ENCODE measurements at regions of chr7 and their contacts with region 1.

Region 1: DNA sequence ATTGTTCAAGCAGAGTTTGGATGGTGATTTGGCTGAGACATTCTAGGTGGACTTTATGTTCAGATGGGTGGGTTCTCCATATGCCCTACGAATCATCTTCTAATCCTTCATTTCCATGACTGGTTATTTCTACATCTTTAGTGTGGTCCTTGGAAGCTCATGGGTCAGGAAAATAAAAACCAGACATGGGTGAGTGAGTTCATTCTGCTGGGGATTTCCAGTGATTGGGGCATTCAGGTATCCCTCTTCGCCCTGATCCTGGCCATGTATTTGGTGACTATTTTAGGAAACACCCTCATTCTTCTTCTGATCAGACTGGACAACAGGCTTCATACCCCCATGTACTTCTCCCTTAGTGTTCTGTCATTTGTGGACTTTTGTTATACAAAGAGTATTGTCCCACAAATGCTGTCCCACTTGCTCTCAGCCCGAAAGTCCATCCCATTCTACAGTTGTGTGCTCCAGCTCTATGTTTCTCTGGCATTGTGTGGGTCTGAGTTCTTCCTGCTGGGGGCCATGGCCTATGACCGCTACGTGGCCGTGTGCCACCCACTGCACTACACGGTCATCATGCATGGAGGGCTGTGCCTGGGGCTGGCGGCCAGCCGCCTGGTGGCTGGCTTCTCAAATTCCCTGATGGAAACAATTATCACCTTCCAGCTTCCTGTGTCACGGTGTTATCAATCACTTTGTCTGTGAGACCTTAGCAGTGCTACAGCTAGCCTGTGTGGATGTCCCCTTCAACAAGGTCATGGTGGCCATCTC is 19.2 kb upstream of the OR6B1 start:
- DNase-seq: no peak
- H3K4me3 ChIP-seq: no peak overlapping the region
- H3K27ac ChIP-seq: no peak overlapping the region
- H3K4me1 ChIP-seq: no peaks in the 10 kb centered on the region
- H3K27me3 ChIP-seq: no peaks in the 10 kb centered on the region
- CTCF ChIP-seq: no peak
- EP300 ChIP-seq: no peak
- POLR2A ChIP-seq: no peak

Region 2: DNA sequence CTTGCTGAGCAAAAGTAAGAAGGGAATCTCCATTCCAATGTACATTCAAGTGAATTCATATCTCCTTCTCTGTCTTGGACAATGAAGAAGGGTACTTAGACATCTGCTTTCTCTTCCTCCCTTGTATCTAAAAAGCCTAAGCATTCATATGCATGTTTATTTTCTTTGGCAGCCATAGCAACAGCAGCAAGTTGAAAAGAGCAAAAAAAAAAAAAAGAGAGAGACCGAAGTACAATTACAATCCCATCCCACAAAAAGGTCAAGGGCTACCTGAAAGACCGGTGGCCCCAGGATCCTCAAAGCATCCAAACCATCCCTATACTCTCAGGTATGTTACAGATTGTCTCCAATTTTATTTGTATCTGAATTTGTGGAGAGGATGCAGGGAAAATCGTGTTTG is 22.1 kb before region 1 on chr7:
- intact Hi-C with region 1: loop called in 1 of 4 experiments (anchors 2 kb)
- DNase-seq: no peak
- H3K4me3 ChIP-seq: no peak overlapping the region
- H3K27ac ChIP-seq: no peak overlapping the region
- H3K4me1 ChIP-seq: no peaks in the 10 kb centered on the region
- H3K27me3 ChIP-seq: no peaks in the 10 kb centered on the region
- CTCF ChIP-seq: no peak
- EP300 ChIP-seq: no peak
- POLR2A ChIP-seq: no peak

Region 3: DNA sequence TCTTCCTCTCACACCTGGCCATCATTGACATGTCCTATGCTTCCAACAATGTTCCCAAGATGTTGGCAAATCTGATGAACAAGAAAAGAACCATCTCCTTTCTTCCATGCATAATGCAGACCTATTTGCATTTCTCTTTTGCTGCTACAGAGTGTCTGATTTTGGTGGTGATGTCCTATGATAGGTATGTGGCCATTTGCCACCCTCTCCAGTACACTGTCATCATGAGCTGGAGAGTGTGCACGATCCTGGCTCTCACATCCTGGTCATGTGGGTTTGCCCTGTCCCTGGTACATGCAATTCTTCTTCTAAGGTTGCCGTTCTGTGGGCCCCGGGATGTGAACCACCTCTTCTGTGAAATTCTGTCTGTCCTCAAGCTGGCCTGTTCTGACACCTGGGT is 161.3 kb after region 1 on chr7:
- intact Hi-C with region 1: no loop called
- DNase-seq: no peak
- H3K4me3 ChIP-seq: no peak overlapping the region
- H3K27ac ChIP-seq: no peak overlapping the region
- H3K4me1 ChIP-seq: no peaks in the 10 kb centered on the region
- H3K27me3 ChIP-seq: no peaks in the 10 kb centered on the region
- CTCF ChIP-seq: no peak
- EP300 ChIP-seq: no peak
- POLR2A ChIP-seq: no peak

Region 4: GRCh38 chr7:144549861-144550260 is 568.9 kb after region 1 on chr7:
- intact Hi-C with region 1: no loop called
- DNase-seq: no peak
- H3K4me3 ChIP-seq: no peak overlapping the region
- H3K27ac ChIP-seq: no peak overlapping the region
- H3K4me1 ChIP-seq: no peaks in the 10 kb centered on the region
- H3K27me3 ChIP-seq: no peaks in the 10 kb centered on the region
- CTCF ChIP-seq: no peak
- EP300 ChIP-seq: no peak
- POLR2A ChIP-seq: no peak

Measured in ovary (tissue), 10 donors.